GM23248 (cell line): ENCODE measurements at regions of chr12 and their contacts with region 1.

Region 1: DNA sequence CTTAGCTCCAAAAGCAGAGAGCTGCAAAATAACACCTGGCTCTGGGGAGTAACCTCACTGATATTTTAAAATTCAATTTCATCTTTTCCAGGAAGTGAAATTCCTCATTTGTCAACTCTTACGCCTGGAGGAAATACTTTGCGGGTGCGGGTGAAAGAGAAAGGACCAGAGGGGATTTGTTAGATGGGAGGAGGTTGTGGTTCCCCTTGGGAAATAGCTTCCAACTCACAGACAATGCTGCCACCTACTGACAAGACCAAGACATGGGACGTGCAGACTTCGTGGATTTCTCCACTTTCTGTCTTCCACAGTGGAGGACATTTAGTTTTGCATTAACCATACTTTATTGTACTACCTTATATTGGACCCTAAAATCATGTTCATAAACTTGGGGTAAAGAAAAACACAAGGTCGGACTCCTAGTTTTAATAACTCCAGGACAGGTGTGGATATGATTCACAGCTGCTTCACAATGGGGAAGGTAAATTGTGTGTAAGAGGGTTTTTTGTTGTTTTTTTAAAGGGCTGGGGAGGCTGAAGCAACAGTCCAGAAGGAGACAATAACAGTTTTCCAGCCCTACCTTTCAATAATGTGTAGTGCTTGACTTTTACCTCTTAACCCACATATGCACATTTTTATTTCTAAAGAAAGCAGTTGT is 10.8 kb downstream of the FBXL14 start:
- DNase-seq: peak; percentile 93
- H3K4me3 ChIP-seq: peak overlapping the region; percentile 57
- H3K27ac ChIP-seq: peak overlapping the region; percentile 75
- H3K4me1 ChIP-seq: peaks cover 66% of the 10 kb centered on the region
- H3K27me3 ChIP-seq: no peaks in the 10 kb centered on the region

Region 2: GRCh38 chr12:685388-685787 is 898.2 kb before region 1 on chr12:
- in situ Hi-C with region 1: no loop called
- DNase-seq: no peak
- H3K4me3 ChIP-seq: no peak overlapping the region
- H3K27ac ChIP-seq: no peak overlapping the region
- H3K4me1 ChIP-seq: no peaks in the 10 kb centered on the region
- H3K27me3 ChIP-seq: no peaks in the 10 kb centered on the region

Region 3: GRCh38 chr12:1117970-1118563 is 465.5 kb before region 1 on chr12:
- in situ Hi-C with region 1: loop called (anchors 10 kb)
- DNase-seq: peak; percentile 75
- H3K4me3 ChIP-seq: no peak overlapping the region
- H3K27ac ChIP-seq: no peak overlapping the region
- H3K4me1 ChIP-seq: peaks cover 28% of the 10 kb centered on the region
- H3K27me3 ChIP-seq: no peaks in the 10 kb centered on the region

Region 4: DNA sequence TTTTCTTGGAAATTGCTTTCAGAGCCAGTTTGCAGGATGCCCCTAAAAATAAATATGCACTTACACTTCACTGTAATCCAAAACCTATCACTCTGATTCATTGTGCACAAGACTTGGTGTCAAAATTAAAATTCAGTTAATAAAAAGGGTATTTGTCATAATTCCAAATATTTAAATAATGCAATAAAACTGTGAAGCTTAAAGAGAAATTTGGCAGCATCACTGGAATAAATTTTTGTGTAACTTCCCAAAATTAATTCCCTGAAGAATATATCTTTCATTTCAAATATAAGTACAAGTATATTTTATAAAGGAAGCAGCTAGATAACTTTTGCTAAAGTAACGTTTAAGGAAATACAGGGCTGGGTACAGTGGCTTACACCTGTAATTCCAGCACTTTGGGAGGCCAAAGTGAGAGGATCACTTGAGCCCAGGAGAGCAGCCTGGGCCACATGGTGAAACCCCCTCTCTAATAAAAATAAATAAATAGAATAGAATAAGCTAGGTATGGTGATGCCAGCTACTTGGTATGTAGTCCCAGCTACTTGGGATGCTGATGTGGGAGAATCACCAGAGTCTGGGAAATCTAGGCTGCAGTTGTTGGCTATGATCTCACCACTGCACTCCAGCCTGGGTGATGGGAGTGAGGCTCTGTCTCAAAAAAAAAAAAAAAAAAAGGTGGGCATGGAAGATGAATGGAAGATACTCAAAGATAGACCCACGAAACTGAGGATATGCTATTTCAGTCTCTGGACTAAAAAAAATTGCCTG is 222.9 kb before region 1 on chr12:
- in situ Hi-C with region 1: no loop called
- DNase-seq: peak; percentile 85
- H3K4me3 ChIP-seq: no peak overlapping the region
- H3K27ac ChIP-seq: peak overlapping the region; percentile 70
- H3K4me1 ChIP-seq: peaks cover 34% of the 10 kb centered on the region
- H3K27me3 ChIP-seq: no peaks in the 10 kb centered on the region